IMR-90 (cell line): ENCODE measurements at regions of chr1 and their contacts with region 1.

Region 1: GRCh38 chr1:196209983-196210382 is 398.3 kb downstream of the KCNT2 start:
- DNase-seq: no peak
- ATAC-seq: no peak
- H3K4me3 ChIP-seq: no peak overlapping the region
- H3K27ac ChIP-seq: no peak overlapping the region
- H3K4me1 ChIP-seq: peaks cover 6% of the 10 kb centered on the region
- H3K27me3 ChIP-seq: no peaks in the 10 kb centered on the region
- CTCF ChIP-seq: no peak
- POLR2A ChIP-seq: no peak
- RAD21 ChIP-seq: no peak

Region 2: DNA sequence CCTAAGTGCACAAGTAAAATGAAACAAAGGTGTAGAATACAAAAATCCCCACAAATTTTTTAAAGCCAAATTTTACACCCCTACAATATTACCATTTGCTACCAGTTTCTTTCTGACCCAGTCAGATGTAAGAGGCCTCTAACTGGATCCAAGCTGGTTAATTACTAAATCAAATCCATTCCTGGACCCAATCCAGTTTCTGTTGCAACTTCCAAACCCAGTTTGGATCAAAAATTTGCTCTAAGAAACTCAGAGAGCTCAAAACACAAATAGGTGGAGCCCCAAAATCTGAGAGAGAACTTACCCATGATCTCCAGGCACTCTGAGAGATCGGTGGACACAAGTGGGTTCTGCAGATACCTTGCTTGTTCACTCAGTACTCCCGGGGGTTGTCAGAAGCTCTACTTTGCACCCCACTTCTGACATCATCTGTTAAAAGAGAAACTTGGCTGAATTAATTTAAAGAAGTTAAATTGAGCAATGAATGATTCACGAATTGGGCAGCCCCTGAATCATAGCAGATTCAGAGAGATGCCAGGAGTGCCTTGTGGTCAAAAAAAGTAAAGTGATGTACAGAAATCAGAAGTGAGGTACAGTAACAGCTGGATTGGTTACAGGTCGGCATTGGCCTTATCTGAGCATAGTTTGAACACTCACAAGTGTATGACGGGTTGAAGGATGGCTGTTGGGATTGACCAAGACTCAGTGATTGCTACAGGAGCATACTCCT is 49.8 kb before region 1 on chr1:
- CTCF ChIA-PET with region 1: interaction called, 3 read pairs
- POLR2A ChIA-PET with region 1: no interaction called
- dilution Hi-C with region 1: no loop called
- in situ Hi-C with region 1: no loop called
- intact Hi-C with region 1: loop called (anchors 5 kb)
- DNase-seq: peak; percentile 82
- ATAC-seq: peak; percentile 77
- H3K4me3 ChIP-seq: no peak overlapping the region
- H3K27ac ChIP-seq: no peak overlapping the region
- H3K4me1 ChIP-seq: no peaks in the 10 kb centered on the region; the same call in 1 of the 2 replicates
- H3K27me3 ChIP-seq: no peaks in the 10 kb centered on the region
- CTCF ChIP-seq: no peak
- POLR2A ChIP-seq: no peak
- RAD21 ChIP-seq: no peak

Region 3: DNA sequence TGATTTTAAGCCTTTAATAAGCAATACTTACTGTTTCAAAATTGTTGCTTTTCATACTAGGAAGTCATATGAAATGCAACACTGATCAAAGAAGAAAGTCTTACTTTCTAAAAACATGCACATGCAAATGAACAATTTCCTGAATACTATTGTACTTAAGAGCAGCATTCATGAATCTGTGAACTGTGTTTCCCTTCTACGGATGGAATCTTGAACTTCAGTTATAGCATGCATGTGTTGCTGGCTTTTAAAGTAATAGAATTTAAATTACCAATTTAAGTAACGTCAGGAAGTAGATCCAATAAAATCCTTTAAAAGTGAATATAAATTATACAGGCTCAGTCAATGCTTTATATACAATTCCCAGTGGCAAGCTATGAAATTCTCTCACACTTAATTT is 49.3 kb after region 1 on chr1:
- CTCF ChIA-PET with region 1: no interaction called
- POLR2A ChIA-PET with region 1: no interaction called
- dilution Hi-C with region 1: no loop called
- in situ Hi-C with region 1: no loop called
- intact Hi-C with region 1: loop called (anchors 5 kb)
- DNase-seq: no peak
- ATAC-seq: no peak
- H3K4me3 ChIP-seq: no peak overlapping the region
- H3K27ac ChIP-seq: no peak overlapping the region
- H3K4me1 ChIP-seq: no peaks in the 10 kb centered on the region
- H3K27me3 ChIP-seq: no peaks in the 10 kb centered on the region
- CTCF ChIP-seq: no peak
- POLR2A ChIP-seq: no peak
- RAD21 ChIP-seq: no peak

Region 4: GRCh38 chr1:197062692-197063091 is 852.7 kb after region 1 on chr1:
- CTCF ChIA-PET with region 1: no interaction called
- POLR2A ChIA-PET with region 1: no interaction called
- dilution Hi-C with region 1: no loop called
- in situ Hi-C with region 1: no loop called
- intact Hi-C with region 1: no loop called
- DNase-seq: no peak
- ATAC-seq: no peak
- H3K4me3 ChIP-seq: no peak overlapping the region
- H3K27ac ChIP-seq: no peak overlapping the region
- H3K4me1 ChIP-seq: no peaks in the 10 kb centered on the region
- H3K27me3 ChIP-seq: no peaks in the 10 kb centered on the region
- CTCF ChIP-seq: no peak
- POLR2A ChIP-seq: no peak
- RAD21 ChIP-seq: no peak